Natural killer cell (primary cell): ENCODE measurements at regions of chr17 and their contacts with region 1.

Region 1: GRCh38 chr17:8118769-8119580 is 661 bp upstream of the ALOXE3 start:
- DNase-seq: peak; percentile 84 to 90
- ATAC-seq: peak; percentile 62 to 79 (median 68)
- H3K4me3 ChIP-seq: peak overlapping the region; percentile 91
- H3K4me3 Mint-ChIP-seq: peak overlapping the region; percentile 93
- H3K27ac ChIP-seq: peak overlapping the region; percentile 76
- H3K27ac Mint-ChIP-seq: peak overlapping the region; percentile 98 to 100
- H3K4me1 ChIP-seq: peaks cover 57% of the 10 kb centered on the region
- H3K4me1 Mint-ChIP-seq: peaks cover 55 to 56% of the 10 kb centered on the region in 2 donors
- H3K27me3 ChIP-seq: peaks cover 48% of the 10 kb centered on the region
- H3K27me3 Mint-ChIP-seq: peaks cover 51 to 55% of the 10 kb centered on the region in 2 donors
- CTCF ChIP-seq: peak; percentile 89

Region 2: DNA sequence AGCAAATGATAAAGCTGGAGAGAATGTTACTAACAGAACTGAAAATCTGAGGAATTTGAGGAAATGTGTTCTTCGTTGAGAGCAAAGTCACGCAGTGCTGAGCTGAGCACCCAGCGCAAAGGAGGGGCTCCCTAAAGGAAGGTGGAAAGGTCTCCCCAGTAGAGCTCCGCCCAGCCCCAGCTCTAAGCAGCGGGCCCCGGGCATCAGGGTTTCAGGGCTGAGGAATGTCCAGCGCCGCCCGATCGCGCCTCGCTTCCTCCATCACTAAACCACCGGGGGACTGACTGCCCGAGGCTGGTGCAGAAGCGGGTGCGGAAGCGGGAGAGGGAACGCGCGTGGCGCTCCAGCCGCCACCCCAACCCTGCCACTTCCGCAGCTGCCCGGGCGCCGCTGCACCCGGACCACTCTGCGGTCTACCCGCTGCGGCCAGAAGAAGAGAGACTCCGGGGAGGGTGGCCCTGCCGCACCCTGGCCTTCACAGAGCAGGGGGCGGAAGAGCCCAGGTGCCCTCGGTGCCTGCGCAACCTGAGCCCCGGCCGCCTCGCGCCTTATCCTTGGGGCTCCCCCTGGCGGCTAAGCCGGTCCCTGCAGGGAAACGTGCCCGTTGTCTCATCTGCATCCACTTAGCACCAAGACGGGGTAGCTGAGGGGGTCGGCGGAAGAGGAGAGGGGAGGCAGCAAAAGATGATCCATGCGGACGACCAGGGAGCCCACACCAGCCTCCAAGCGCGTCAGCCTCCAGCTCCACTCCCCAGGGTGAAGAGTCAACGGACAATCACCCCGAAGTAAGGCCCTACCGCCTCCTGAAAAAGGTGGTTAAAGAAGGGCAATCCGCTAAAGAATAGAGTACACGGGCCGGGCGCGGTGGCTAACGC is 129.0 kb before region 1 on chr17:
- intact Hi-C with region 1: no loop called
- DNase-seq: peak; percentile 94
- ATAC-seq: peak; percentile 89 to 93 (median 91)
- H3K4me3 ChIP-seq: peak overlapping the region; percentile 37
- H3K4me3 Mint-ChIP-seq: peak overlapping the region; percentile 89
- H3K27ac ChIP-seq: peak overlapping the region; percentile 48
- H3K27ac Mint-ChIP-seq: peak overlapping the region; percentile 83 to 91
- H3K4me1 ChIP-seq: peaks cover 16% of the 10 kb centered on the region
- H3K4me1 Mint-ChIP-seq: peaks cover 22 to 25% of the 10 kb centered on the region in 2 donors
- H3K27me3 ChIP-seq: no peaks in the 10 kb centered on the region
- H3K27me3 Mint-ChIP-seq: peaks cover 9 to 11% of the 10 kb centered on the region in 2 donors
- CTCF ChIP-seq: peak; percentile 90

Region 3: GRCh38 chr17:8079291-8080207 is 39.4 kb before region 1 on chr17:
- intact Hi-C with region 1: loop called (anchors 5 kb)
- DNase-seq: peak; percentile 82 to 91
- ATAC-seq: peak; percentile 82 to 88 (median 87)
- H3K4me3 ChIP-seq: peak overlapping the region; percentile 32
- H3K4me3 Mint-ChIP-seq: peak overlapping the region; percentile 90
- H3K27ac ChIP-seq: peak overlapping the region; percentile 46
- H3K27ac Mint-ChIP-seq: peak overlapping the region; percentile 56 to 88
- H3K4me1 ChIP-seq: peaks cover 19% of the 10 kb centered on the region
- H3K4me1 Mint-ChIP-seq: peaks cover 0 to 15% of the 10 kb centered on the region in 2 donors
- H3K27me3 ChIP-seq: peaks cover 3% of the 10 kb centered on the region
- H3K27me3 Mint-ChIP-seq: peaks cover 8 to 13% of the 10 kb centered on the region in 2 donors
- CTCF ChIP-seq: peak; percentile 89